Activated CD4-positive, alpha-beta T cell treated with anti-CD3 and anti-CD28 coated beads, Interleukin-2, amount 10 ng/mL, durations not matched to agents 24 days and 14 days (primary cell): ENCODE measurements at regions of chr17 and their contacts with region 1.

Region 1: DNA sequence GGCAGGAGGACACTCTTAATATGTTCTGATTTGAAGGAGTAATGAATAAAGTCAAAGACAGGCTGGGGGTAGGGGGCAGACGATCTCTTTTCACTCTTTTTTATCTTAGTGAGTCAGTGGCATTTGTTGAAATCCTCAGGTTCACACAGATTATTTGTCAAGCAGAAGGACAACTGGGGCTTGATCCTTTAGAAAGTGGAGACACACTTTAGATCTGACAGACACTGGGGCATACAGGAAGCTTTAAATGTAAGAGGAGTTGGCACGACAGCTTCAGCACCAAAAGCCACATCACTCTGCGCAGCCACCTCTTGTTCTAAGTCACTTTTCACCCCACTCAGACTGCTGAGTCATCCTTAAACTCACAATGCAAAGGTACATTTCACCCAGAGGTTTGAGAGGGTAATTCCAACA is 121.5 kb downstream of the STXBP4 start:
- DNase-seq: peak; percentile 82
- H3K4me3 Mint-ChIP-seq: peak overlapping the region; percentile 34
- H3K27ac Mint-ChIP-seq: peak overlapping the region; percentile 78
- H3K4me1 Mint-ChIP-seq: peaks cover 9% of the 10 kb centered on the region
- H3K27me3 Mint-ChIP-seq: no peaks in the 10 kb centered on the region

Region 2: GRCh38 chr17:55037828-55038227 is 52.3 kb before region 1 on chr17:
- intact Hi-C with region 1: loop called (anchors 5 kb)
- DNase-seq: peak; percentile 81
- H3K4me3 Mint-ChIP-seq: no peak overlapping the region
- H3K27ac Mint-ChIP-seq: no peak overlapping the region
- H3K4me1 Mint-ChIP-seq: peaks cover 21% of the 10 kb centered on the region
- H3K27me3 Mint-ChIP-seq: no peaks in the 10 kb centered on the region